ENCODE measurements at regions of chr19 and their contacts with region 1.

Region 1: DNA sequence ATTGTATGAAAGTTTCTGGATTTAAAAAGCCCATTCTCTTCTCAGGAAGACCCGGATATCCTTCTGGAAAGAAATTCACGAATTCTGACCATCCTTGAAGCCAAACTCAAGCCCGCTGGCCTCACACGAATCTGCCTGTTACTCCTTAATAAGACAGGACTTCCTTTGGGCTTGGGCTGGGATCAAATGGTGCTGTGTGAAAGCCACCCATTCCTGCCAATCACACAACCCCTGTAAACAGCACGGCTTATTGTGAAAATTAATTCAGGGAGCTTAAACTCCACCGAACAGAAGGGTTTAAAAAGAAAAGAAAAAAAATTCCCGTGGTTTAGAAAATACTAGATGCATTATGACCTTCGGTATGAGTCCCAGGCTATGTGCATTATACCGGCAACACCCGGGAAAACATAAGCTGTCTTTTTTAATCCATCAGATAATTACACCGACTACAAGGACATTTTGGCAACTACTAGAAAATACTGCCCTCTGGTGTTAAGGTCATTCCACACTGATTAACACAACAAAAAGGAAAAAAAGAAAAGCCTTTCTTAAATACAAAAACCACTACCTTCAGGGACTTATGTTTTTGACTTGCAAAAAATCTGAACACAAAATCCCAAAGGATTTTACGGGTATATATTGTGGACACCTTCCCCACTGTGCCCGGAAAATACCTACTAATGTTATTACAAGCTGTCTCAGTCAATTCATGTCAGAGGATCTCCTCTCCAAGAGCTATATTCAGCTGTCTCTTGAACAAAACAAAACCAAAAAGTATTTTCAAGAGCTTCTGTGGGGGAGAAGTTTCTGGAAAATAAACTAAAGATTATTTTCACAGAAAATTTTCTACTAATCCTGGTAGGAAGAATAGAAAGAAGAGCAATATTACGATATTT is 76.0 kb upstream of the LSM14A start:
- H3K4me3 ChIP-seq: no peak overlapping the region
- H3K27ac ChIP-seq: no peak overlapping the region
- H3K4me1 ChIP-seq: peaks cover 9% of the 10 kb centered on the region
- CTCF ChIP-seq: peak; percentile 84

Region 2: DNA sequence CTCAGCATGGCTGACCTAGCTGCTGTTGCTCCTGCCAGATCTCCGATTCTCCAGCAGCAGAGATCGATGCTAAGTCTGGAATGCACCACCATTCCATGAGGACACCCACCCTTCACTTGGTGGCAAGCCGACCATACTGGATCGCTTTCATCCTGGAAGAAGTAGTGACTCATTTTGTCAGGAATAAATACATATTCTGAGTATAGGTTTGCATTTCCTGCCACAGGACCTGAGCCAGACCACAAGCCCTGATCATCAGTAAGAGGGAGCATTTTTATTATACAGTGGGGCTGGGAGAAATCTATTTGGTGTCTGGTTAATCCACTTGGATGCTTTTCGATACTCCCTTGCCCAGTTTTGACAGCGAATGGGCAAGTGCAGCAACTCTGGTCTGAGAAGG is 310.5 kb before region 1 on chr19:
- CTCF ChIA-PET with region 1: interaction called, 341 read pairs
- POLR2A ChIA-PET with region 1: no interaction called
- H3K4me3 ChIP-seq: no peak overlapping the region
- H3K27ac ChIP-seq: no peak overlapping the region
- H3K4me1 ChIP-seq: no peaks in the 10 kb centered on the region
- CTCF ChIP-seq: no peak

Region 3: GRCh38 chr19:33927789-33928457 is 168.3 kb before region 1 on chr19:
- CTCF ChIA-PET with region 1: interaction called, 11 read pairs
- POLR2A ChIA-PET with region 1: no interaction called
- H3K4me3 ChIP-seq: no peak overlapping the region
- H3K27ac ChIP-seq: no peak overlapping the region
- H3K4me1 ChIP-seq: no peaks in the 10 kb centered on the region; the same call in 1 of the 2 replicates
- CTCF ChIP-seq: no peak

Region 4: DNA sequence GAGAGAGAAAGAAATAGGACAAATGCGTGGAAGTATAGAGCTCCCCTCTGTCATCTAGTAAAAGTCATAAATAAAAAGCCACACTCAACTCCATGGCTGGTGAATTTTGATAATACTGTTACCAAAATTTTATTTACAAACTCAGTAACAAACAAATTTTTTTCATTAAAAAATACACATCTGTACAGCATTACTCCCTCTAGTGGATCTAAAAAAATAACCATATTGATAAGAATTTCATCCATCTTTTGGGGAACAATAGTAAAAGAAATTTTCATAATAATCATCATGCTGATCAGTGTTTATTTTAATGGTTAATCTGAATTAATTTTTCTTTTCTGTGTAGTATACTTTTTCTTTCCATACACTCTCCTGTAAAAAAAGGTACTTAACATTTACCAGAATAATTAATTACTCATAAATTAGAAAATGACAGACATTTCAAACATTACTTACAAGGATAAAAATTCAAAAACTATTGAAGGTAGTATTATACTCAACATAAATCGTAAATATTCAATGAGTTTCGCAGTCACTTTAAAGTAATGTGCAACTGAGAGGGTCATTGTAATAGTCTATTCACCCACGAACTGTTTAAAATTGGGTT is 97.4 kb before region 1 on chr19:
- CTCF ChIA-PET with region 1: interaction called, 31 read pairs
- POLR2A ChIA-PET with region 1: no interaction called
- H3K4me3 ChIP-seq: no peak overlapping the region
- H3K27ac ChIP-seq: no peak overlapping the region
- H3K4me1 ChIP-seq: 0 out of 2 replicates have a peak, but pooled peaks cover 4% of the 10 kb centered on the region
- CTCF ChIP-seq: peak; percentile 60

Region 5: GRCh38 chr19:34041925-34042521 is 54.2 kb before region 1 on chr19:
- CTCF ChIA-PET with region 1: interaction called, 70 read pairs
- POLR2A ChIA-PET with region 1: interaction called, 5 read pairs
- H3K4me3 ChIP-seq: no peak overlapping the region
- H3K27ac ChIP-seq: no peak overlapping the region
- H3K4me1 ChIP-seq: no peaks in the 10 kb centered on the region
- CTCF ChIP-seq: peak; percentile 70; the same call in 1 of the 2 replicates

Region 6: DNA sequence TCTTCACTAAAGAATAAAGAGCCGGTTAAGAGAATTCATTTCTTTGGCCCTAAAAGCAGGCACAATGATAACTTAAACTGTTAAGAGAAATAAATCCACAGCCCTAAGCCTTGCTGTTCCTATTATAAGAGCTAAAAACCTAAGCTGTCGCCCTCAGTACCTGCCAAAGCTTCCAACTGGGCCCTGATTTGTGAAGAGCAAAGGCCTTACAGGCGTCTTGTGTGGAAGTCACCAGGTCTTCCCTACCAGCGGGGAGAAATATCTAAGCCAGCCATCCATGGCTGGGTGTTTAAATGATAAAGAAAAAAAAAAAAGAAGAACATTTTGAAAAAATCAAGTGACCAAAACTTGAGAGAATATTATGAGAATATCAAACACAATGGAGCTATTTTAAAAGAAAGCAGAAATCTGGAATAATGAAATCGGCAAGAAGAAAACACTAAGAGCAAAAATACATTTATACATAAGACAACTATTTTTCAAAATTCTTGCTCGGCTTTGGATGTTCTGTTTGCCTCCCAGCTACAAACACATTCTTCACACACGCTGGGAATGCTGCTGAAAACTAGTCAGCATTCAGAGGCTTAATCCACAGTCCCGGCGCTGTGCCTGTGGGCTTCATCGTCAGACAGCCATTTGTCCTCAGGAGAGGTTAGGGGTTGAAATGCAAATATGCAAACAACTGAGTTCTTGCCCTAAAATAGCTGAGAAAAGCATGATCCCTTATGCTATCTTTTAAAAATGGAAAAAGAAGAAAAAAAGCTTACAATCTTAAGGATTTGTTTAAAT is 13.8 kb before region 1 on chr19:
- CTCF ChIA-PET with region 1: interaction called, 114 read pairs
- POLR2A ChIA-PET with region 1: no interaction called
- H3K4me3 ChIP-seq: no peak overlapping the region
- H3K27ac ChIP-seq: no peak overlapping the region
- H3K4me1 ChIP-seq: no peaks in the 10 kb centered on the region
- CTCF ChIP-seq: no peak

Region 7: GRCh38 chr19:34214040-34214439 is 117.8 kb after region 1 on chr19:
- CTCF ChIA-PET with region 1: no interaction called
- POLR2A ChIA-PET with region 1: no interaction called
- H3K4me3 ChIP-seq: no peak overlapping the region
- H3K27ac ChIP-seq: no peak overlapping the region; the same call in 1 of the 2 replicates
- H3K4me1 ChIP-seq: peaks cover 25% of the 10 kb centered on the region
- CTCF ChIP-seq: no peak